ENCODE measurements at regions of chr15 and their contacts with region 1.

Region 1: DNA sequence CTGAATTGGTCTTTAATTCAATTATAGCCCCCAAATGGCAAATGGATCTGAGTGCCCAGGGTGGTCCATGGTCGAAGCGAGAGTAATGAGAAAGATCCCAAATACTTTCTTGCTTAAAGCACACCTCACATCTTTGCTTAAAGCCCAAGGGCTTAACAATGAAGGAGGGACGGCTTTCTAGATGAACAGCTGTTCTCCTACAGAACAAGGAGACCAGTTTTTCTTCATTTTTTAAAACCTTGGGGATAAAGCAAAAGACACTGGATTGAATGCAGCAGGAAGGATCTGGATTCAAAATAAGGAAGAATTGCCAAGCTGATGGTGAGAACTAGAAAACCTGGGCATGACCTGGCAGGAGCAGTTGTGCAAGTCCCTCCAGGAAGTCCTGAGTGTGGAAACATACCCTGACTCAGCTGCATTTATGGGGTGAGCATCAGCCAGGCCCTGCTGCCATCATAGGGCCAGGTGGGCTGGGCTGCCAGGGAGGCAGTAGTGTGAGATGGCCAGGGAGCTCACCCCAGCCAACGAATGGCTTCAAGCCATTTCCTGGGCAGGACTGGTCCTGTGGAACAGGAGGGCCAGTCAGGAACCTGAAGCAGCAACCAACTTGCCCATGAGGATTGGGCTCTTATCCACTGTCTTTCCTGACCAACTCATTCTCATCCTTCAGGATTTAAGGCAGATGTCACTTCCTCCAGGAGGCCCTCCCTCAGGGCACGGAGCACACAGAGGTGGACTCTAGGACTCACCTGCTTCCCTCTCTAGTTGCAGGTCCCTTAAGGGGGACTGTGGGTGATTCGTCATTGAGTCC is 18.4 kb upstream of the RHCG start:
- DNase-seq: peak in 1 of 2 donors; percentile 21
- H3K4me3 ChIP-seq: no peak overlapping the region
- H3K27ac ChIP-seq: no peak overlapping the region
- H3K4me1 ChIP-seq: no peaks in the 10 kb centered on the region
- H3K27me3 ChIP-seq: peaks cover 0 to 4% of the 10 kb centered on the region in 2 donors
- CTCF ChIP-seq: no peak
- POLR2A ChIP-seq: no peak

Region 2: GRCh38 chr15:89367485-89368451 is 147.0 kb before region 1 on chr15:
- intact Hi-C with region 1: loop called (anchors 5 kb)
- DNase-seq: no peak
- H3K4me3 ChIP-seq: peak overlapping the region in 1 of 3 donors; percentile 57
- H3K27ac ChIP-seq: no peak overlapping the region
- H3K4me1 ChIP-seq: peaks cover 0 to 6% of the 10 kb centered on the region in 2 donors
- H3K27me3 ChIP-seq: peaks cover 29 to 98% of the 10 kb centered on the region in 2 donors
- CTCF ChIP-seq: no peak
- POLR2A ChIP-seq: no peak

Region 3: GRCh38 chr15:89459271-89460038 is 55.3 kb before region 1 on chr15:
- intact Hi-C with region 1: loop called (anchors 2 kb)
- DNase-seq: no peak
- H3K4me3 ChIP-seq: no peak overlapping the region
- H3K27ac ChIP-seq: no peak overlapping the region
- H3K4me1 ChIP-seq: no peaks in the 10 kb centered on the region
- H3K27me3 ChIP-seq: no peaks in the 10 kb centered on the region
- CTCF ChIP-seq: no peak
- POLR2A ChIP-seq: no peak